AG04449 (cell line): ENCODE measurements at regions of chr5 and their contacts with region 1.

Region 1: GRCh38 chr5:149035372-149035790 is 27.5 kb downstream of the SH3TC2 start:
- DNase-seq: no peak
- H3K4me3 ChIP-seq: no peak overlapping the region
- CTCF ChIP-seq: peak; percentile 92

Region 2: GRCh38 chr5:148443998-148444397 is 591.4 kb before region 1 on chr5:
- CTCF ChIA-PET with region 1: interaction called, 16 read pairs
- POLR2A ChIA-PET with region 1: no interaction called
- DNase-seq: peak; percentile 14
- H3K4me3 ChIP-seq: no peak overlapping the region
- CTCF ChIP-seq: peak; percentile 63

Region 3: GRCh38 chr5:148794729-148795561 is 240.4 kb before region 1 on chr5:
- CTCF ChIA-PET with region 1: interaction called, 11 read pairs
- POLR2A ChIA-PET with region 1: no interaction called
- DNase-seq: peak; percentile 56
- H3K4me3 ChIP-seq: no peak overlapping the region
- CTCF ChIP-seq: no peak

Region 4: DNA sequence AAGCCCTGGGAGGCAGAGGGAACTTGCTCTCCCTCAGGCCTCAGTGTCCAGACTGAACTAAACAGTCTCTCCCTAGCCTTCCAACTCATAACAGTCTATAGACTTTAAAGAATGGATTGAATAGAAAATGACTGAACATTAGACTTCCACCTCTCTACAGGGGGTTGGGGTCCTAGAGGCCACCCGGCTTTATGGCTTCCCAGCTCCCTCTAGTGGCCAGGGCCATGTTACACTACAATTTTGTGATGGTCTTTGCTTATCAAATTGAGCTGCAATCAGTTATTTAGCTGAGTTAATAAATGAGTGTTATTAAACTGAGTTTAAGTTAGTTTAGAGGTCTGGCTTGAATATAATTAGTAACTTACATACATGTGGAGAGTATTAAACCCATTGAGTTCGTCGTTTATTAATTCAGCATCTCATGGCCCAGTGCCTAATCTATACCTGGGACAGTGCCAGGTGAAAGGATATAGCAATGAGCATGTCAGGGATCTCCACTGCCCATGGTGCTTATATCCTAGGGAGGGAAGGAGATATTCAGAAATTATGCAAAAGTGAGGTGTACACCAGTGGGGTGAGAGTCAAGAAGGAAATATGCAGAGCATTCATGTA is 77.7 kb before region 1 on chr5:
- CTCF ChIA-PET with region 1: interaction called, 19 read pairs
- POLR2A ChIA-PET with region 1: no interaction called
- DNase-seq: no peak
- H3K4me3 ChIP-seq: no peak overlapping the region
- CTCF ChIP-seq: peak; percentile 63

Region 5: DNA sequence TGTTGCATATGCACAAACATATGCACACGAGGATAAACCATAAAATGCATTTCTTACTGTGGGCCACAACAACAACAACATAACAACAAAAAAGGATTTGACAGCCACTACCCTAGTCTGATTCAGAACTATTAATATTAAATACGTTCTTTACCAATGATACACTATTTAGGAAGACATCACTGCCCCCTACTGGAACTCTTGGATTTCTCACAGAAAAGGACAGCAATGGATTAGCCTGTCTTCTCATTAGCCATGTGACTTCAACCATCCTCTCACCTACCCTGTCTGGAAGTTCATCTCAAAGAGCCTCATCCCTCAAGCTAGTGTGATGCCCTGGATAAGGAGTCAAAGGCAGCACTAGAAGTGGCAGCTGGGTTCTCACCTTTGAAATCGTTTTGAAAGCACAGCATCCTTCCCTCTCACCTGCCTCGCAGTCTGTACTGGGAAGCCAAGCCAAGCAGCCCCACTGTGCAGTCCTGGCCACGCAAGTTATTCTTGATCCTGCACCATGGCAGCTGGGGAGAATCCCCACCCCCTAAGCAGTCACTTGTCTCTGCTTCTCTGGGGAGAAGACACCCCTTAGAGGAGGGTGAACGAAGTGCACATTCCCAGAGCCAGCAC is 37.1 kb before region 1 on chr5:
- CTCF ChIA-PET with region 1: interaction called, 72 read pairs
- POLR2A ChIA-PET with region 1: no interaction called
- DNase-seq: no peak
- H3K4me3 ChIP-seq: no peak overlapping the region
- CTCF ChIP-seq: peak; percentile 57

Region 6: GRCh38 chr5:149024477-149024876 is 10.9 kb before region 1 on chr5:
- CTCF ChIA-PET with region 1: interaction called, 68 read pairs
- POLR2A ChIA-PET with region 1: interaction called, 3 read pairs
- DNase-seq: no peak
- H3K4me3 ChIP-seq: no peak overlapping the region
- CTCF ChIP-seq: no peak

Region 7: GRCh38 chr5:149121145-149121544 is 85.8 kb after region 1 on chr5:
- CTCF ChIA-PET with region 1: interaction called, 126 read pairs
- POLR2A ChIA-PET with region 1: no interaction called
- DNase-seq: no peak
- H3K4me3 ChIP-seq: no peak overlapping the region
- CTCF ChIP-seq: no peak